Activated CD4-positive, alpha-beta T cell treated with anti-CD3 and anti-CD28 coated beads, Interleukin-2, amount 10 ng/mL, durations not matched to agents 7 days and 5 days (primary cell): ENCODE measurements at regions of chr19 and their contacts with region 1.

Region 1: DNA sequence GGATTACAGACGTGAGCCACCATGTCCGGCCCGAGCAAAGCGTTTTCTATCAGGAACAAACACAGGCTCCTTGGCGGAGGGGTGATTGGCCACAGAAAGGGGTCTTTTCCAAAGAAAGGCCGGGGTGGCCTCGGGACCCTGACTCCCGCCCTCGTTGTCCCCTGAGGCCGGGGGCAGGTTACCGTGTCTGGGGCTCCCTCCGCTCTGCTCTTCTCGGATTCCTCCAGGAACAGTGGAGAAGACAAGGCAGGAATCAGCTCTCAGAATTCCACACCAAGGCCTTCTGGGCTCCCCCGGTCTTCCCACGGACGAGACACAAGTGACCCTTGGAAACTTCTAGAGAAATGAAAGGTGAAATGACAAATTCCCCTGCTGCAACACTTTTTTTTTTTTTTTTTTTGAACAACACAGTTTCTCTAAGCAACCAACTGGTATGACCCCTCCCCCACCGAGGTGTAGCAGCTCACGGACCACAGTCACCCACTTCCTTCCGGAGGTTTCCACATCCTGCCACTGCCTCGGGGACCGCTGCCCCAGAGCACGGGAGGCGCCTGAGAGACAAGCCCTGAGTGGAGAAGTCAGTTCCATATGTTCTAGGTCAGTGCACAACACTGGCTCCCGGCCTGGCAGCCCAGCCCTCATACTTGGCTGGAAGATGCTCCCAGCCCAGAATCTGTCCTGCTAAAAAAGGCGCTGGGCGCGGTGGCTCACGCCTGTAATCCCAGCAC is 11.0 kb downstream of the MOB3A start:
- DNase-seq: peak; percentile 98
- H3K4me3 Mint-ChIP-seq: peak overlapping the region; percentile 99
- H3K27ac Mint-ChIP-seq: peak overlapping the region; percentile 98
- H3K4me1 Mint-ChIP-seq: peaks cover 58% of the 10 kb centered on the region
- H3K27me3 Mint-ChIP-seq: no peaks in the 10 kb centered on the region

Region 2: GRCh38 chr19:1942078-1942933 is 142.9 kb before region 1 on chr19:
- CTCF ChIA-PET with region 1: no interaction called
- POLR2A ChIA-PET with region 1: no interaction called
- DNase-seq: peak; percentile 85
- H3K4me3 Mint-ChIP-seq: peak overlapping the region; percentile 99
- H3K27ac Mint-ChIP-seq: peak overlapping the region; percentile 97
- H3K4me1 Mint-ChIP-seq: peaks cover 38% of the 10 kb centered on the region
- H3K27me3 Mint-ChIP-seq: no peaks in the 10 kb centered on the region

Region 3: GRCh38 chr19:1977120-1977519 is 108.0 kb before region 1 on chr19:
- CTCF ChIA-PET with region 1: no interaction called
- POLR2A ChIA-PET with region 1: interaction called, 13 read pairs
- DNase-seq: no peak
- H3K4me3 Mint-ChIP-seq: no peak overlapping the region
- H3K27ac Mint-ChIP-seq: no peak overlapping the region
- H3K4me1 Mint-ChIP-seq: peaks cover 3% of the 10 kb centered on the region
- H3K27me3 Mint-ChIP-seq: no peaks in the 10 kb centered on the region

Region 4: DNA sequence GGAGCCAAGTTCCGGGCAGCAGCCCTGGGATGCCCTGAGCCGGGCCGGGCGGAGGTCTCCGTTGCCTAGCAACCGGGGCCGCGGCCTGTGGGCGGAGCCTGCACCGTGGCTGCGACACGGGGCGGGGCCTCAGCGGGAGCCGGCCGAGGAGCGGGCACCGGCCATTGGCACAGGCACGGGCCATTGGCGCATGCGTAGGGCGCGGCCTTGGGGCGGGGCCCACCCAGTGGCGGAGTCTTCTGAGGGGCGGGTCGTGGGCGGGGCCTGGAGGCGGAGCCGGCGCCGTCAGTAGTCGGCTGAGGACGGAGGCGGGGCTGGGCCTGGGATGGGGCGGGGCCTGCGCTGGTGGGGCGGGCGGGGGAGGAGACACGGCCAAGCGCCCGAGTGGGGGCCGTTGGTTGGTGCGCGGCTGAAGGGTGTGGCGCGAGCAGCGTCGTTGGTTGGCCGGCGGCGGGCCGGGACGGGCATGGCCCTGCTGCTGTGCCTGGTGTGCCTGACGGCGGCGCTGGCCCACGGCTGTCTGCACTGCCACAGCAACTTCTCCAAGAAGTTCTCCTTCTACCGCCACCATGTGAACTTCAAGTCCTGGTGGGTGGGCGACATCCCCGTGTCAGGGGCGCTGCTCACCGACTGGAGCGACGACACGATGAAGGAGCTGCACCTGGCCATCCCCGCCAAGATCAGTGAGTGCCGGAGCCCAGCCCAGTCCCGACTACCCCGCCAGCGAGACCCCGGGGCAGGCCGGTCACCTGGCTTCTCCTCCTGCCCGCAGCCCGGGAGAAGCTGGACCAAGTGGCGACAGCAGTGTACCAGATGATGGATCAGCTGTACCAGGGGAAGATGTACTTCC is 11.5 kb after region 1 on chr19 and contains the start of gene IZUMO4:
- CTCF ChIA-PET with region 1: interaction called, 33 read pairs
- POLR2A ChIA-PET with region 1: interaction called, 7 read pairs
- DNase-seq: peak; percentile 99
- H3K4me3 Mint-ChIP-seq: peak within 1 kb of the TSS; percentile 99
- H3K27ac Mint-ChIP-seq: peak within 1 kb of the TSS; percentile 93
- H3K4me1 Mint-ChIP-seq: peaks cover 31% of the 10 kb centered on the region
- H3K27me3 Mint-ChIP-seq: no peaks in the 10 kb centered on the region
- total RNA-seq, gene IZUMO4: 7.5 to 9.9 TPM